Pancreas (tissue), 10 donors: ENCODE measurements at regions of chr3 and their contacts with region 1.

Region 1: DNA sequence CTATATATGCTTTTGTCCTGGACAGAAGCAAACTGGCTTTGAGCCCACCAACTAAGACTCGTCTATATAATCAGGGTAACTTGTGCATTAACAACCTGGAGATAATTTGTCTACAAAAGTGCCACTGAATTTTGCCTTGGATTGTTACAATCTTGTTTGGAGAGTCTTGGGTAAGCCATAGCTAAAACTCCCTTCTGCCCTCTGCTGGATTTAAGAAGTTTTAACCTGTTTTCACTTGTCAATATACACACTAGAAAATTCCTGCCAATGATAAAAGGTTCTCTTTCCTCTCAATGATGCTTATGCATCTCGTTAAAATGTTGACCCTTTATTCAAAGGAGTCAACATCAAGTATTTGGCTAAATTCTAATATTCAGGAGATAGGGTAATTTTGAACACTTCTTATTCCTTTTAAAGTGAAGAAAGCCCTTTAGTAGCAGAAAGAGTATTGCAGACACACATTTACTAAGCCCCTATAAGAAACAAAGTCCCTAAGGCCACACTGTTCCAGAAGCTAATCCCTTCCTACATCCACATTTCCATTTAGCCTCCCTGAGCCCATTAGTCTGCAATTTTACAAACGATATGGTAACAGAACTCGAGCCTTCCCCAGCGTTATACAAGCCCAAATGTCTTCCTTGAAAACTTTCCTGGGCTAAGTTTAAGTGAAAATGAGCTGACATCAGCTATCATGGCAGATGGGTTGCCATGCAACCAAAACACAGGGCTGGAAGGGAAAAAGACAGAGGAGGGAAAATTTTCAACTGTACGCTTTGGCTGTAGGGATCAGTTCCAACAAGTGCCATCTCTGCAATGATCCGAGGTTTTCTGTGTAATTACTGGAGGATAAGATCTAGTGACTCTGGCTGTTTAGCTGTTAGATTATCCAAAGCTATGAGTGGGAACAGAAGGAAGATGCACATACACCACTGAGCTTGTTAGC is 75.9 kb upstream of the FGF12 start:
- DNase-seq: no peak
- ATAC-seq: peak; percentile 53 to 85 (median 80)
- H3K4me3 ChIP-seq: no peak overlapping the region
- H3K27ac ChIP-seq: no peak overlapping the region
- H3K4me1 ChIP-seq: no peaks in the 10 kb centered on the region
- H3K27me3 ChIP-seq: no peaks in the 10 kb centered on the region
- CTCF ChIP-seq: peak; percentile 26 to 44 (median 34)

Region 2: DNA sequence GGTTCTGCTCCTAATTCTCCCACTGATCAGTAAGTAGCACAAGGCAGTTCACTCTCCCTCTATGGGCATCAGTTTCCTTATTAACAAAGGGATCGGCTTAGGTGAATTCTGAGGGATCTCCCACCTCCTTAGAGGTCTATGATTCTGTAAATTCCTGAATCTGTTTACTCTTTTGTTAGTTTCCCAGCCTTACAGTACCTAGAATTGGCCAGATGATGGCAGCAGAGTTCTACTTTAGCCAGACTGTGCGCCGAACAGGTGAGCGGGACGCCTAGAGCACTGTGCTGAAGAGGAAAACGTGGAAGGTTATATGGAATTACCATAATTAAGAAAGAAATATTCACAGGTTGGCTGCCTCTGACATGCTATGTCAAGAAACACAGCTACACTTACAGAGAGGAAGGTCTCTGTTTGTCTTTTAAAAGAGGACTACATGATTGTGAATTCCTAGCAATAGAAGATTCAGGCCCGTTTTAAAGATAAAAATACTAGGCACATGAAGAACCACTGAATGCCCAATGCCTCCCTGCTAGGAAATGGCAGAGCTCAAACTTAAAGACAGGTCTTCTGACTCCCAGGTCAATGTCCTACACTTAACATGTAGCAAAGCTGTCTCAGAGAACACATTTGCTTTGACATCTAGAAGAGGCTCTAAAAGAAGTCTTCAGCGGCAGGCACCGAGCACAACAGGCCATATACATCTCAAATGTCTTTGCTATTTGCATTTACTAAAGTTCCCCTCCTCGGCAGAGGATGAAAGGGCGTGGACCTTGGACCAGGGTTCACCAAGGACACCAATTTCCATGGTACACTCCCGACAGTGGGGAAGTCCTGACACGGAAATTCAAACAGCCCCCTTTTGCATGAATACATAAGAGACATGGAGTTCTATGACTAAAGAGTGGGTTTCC is 335.7 kb before region 1 on chr3:
- intact Hi-C with region 1: loop called in 2 of 3 experiments (anchors 10 kb)
- DNase-seq: peak in 5 of 6 donors; percentile 36 to 70 (median 52)
- ATAC-seq: peak; percentile 85 to 100 (median 98)
- H3K4me3 ChIP-seq: no peak overlapping the region
- H3K27ac ChIP-seq: no peak overlapping the region
- H3K4me1 ChIP-seq: no peaks in the 10 kb centered on the region
- H3K27me3 ChIP-seq: no peaks in the 10 kb centered on the region
- CTCF ChIP-seq: peak; percentile 75 to 87 (median 86)

Region 3: DNA sequence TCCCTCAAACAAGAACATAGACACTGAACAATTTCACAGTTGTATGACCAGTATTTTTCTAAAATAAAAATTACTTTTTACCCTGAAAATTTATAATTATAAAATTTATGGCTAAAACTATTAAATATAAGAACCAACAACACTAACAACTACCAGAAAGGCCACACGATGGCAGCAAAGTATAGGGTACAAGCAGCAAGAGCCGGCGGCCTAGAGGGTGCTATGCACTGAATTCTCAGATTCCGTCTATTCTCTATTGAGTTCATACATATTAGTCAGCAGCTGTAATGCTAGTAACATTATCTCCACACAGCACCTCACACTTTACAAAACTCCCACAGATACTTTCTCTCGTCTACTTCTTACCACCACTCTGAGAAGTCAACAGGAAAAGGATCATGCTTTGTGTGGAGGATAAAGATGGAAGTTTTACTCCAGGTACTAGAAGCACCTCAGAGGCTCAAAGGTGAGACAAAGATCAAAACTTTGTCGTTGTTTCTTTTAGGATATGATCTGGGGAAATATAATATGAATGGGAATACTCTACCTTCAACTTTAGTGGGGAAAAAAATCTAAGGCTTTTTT is 236.4 kb before region 1 on chr3:
- intact Hi-C with region 1: loop called in 2 of 3 experiments (anchors 5 kb)
- DNase-seq: peak; percentile 39 to 77 (median 59)
- ATAC-seq: peak; percentile 80 to 96 (median 92)
- H3K4me3 ChIP-seq: no peak overlapping the region
- H3K27ac ChIP-seq: no peak overlapping the region
- H3K4me1 ChIP-seq: peaks cover 0 to 3% (median 0%) of the 10 kb centered on the region in 3 donors
- H3K27me3 ChIP-seq: peaks cover 0 to 5% (median 0%) of the 10 kb centered on the region in 4 donors
- CTCF ChIP-seq: peak in 3 of 4 donors; percentile 63 to 67 (median 64)

Region 4: DNA sequence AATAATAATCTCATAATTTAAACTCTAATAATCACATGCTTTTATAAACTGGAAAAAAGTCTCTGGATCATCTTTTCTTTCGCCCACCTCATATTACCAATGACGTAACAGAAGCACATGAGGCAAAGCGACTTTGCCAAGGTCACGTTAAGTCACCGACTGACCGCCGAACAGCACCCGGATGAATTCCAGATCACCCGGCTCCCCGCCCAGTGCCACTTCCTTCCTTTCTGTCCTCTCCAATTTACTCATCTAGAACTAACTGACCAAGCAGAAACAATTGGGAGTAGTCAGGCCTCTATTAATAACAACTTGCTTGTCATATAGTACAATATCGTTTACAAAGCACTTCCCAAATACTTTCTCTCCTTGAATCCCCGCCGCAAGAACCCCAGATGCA is 97.0 kb before region 1 on chr3:
- intact Hi-C with region 1: no loop called
- DNase-seq: no peak
- ATAC-seq: no peak
- H3K4me3 ChIP-seq: no peak overlapping the region
- H3K27ac ChIP-seq: no peak overlapping the region
- H3K4me1 ChIP-seq: no peaks in the 10 kb centered on the region
- H3K27me3 ChIP-seq: no peaks in the 10 kb centered on the region
- CTCF ChIP-seq: no peak